Esophagus muscularis mucosa (tissue), 4 donors: ENCODE measurements at regions of chr12 and their contacts with region 1.

Region 1: GRCh38 chr12:103924761-103925641 is 5.2 kb upstream of the HSP90B1 start:
- DNase-seq: no peak
- H3K4me3 ChIP-seq: no peak overlapping the region
- H3K27ac ChIP-seq: no peak overlapping the region
- H3K4me1 ChIP-seq: peaks cover 0 to 12% (median 10%) of the 10 kb centered on the region in 4 donors
- H3K27me3 ChIP-seq: no peaks in the 10 kb centered on the region
- CTCF ChIP-seq: no peak
- EP300 ChIP-seq: no peak
- POLR2A ChIP-seq: no peak

Region 2: GRCh38 chr12:103799870-103800771 is 124.9 kb before region 1 on chr12:
- intact Hi-C with region 1: no loop called
- DNase-seq: no peak
- H3K4me3 ChIP-seq: peak overlapping the region in 3 of 4 donors; percentile 7 to 29 (median 26)
- H3K27ac ChIP-seq: peak overlapping the region; percentile 70 to 84 (median 76)
- H3K4me1 ChIP-seq: peaks cover 18 to 84% (median 73%) of the 10 kb centered on the region in 4 donors
- H3K27me3 ChIP-seq: no peaks in the 10 kb centered on the region
- CTCF ChIP-seq: no peak
- EP300 ChIP-seq: no peak
- POLR2A ChIP-seq: no peak

Region 3: GRCh38 chr12:103884316-103884715 is 40.7 kb before region 1 on chr12:
- intact Hi-C with region 1: loop called (anchors 2 kb)
- DNase-seq: no peak
- H3K4me3 ChIP-seq: no peak overlapping the region
- H3K27ac ChIP-seq: no peak overlapping the region
- H3K4me1 ChIP-seq: no peaks in the 10 kb centered on the region
- H3K27me3 ChIP-seq: no peaks in the 10 kb centered on the region
- CTCF ChIP-seq: peak; percentile 19 to 37 (median 25)
- EP300 ChIP-seq: no peak
- POLR2A ChIP-seq: no peak

Region 4: GRCh38 chr12:104314242-104314614 is 389.2 kb after region 1 on chr12:
- intact Hi-C with region 1: no loop called
- DNase-seq: no peak
- H3K4me3 ChIP-seq: no peak overlapping the region
- H3K27ac ChIP-seq: no peak overlapping the region
- H3K4me1 ChIP-seq: peaks cover 0 to 23% (median 10%) of the 10 kb centered on the region in 4 donors
- H3K27me3 ChIP-seq: no peaks in the 10 kb centered on the region
- CTCF ChIP-seq: no peak
- EP300 ChIP-seq: no peak
- POLR2A ChIP-seq: no peak